ENCODE measurements at regions of chr4 and their contacts with region 1.

Region 1: GRCh38 chr4:176789955-176790354 is 2.8 kb downstream of the VEGFC start:
- ATAC-seq: peak in 4 of 8 experiments; percentile 5 to 35 (median 26)
- H3K4me3 ChIP-seq: no peak overlapping the region
- H3K27ac ChIP-seq: no peak overlapping the region
- H3K4me1 ChIP-seq: peaks cover 0 to 4% of the 10 kb centered on the region in 2 donors

Region 2: GRCh38 chr4:176563591-176563990 is 226.4 kb before region 1 on chr4:
- in situ Hi-C with region 1: loop called in 1 of 9 experiments (anchors 25 kb)
- ATAC-seq: peak; percentile 37 to 79 (median 62)
- H3K4me3 ChIP-seq: no peak overlapping the region
- H3K27ac ChIP-seq: no peak overlapping the region
- H3K4me1 ChIP-seq: peaks cover 0 to 7% of the 10 kb centered on the region in 2 donors

Region 3: GRCh38 chr4:177047070-177047850 is 257.3 kb after region 1 on chr4:
- in situ Hi-C with region 1: loop called in 1 of 9 experiments (anchors 25 kb)
- ATAC-seq: peak; percentile 73 to 98 (median 84)
- H3K4me3 ChIP-seq: no peak overlapping the region
- H3K27ac ChIP-seq: no peak overlapping the region
- H3K4me1 ChIP-seq: no peaks in the 10 kb centered on the region